Uterus (tissue), 4 donors: ENCODE measurements at regions of chr20 and their contacts with region 1.

Region 1: DNA sequence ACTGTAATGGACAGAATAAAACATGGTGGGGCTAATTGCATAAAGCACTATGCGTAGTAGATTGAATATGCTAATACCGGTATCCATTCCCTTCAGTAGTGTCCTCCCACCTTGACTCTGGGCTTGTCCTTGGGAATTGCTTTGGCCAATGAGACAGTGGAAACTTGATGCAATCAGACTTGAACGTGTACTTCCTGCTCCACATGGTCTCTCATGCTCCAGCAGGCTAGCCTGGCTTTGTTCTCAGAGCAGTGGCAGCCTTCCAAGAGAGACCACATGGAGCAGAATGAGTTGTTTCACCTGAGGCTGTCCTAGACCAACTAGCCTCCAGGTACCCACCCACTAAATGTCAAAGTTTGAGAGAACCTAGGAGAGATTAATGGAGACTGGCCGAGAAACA is 37.0 kb upstream of the BTBD3 start:
- DNase-seq: no peak
- H3K4me3 ChIP-seq: no peak overlapping the region
- H3K27ac ChIP-seq: no peak overlapping the region
- H3K4me1 ChIP-seq: no peaks in the 10 kb centered on the region
- H3K27me3 ChIP-seq: no peaks in the 10 kb centered on the region
- CTCF ChIP-seq: no peak
- POLR2A ChIP-seq: no peak

Region 2: GRCh38 chr20:11917663-11918062 is 37.0 kb after region 1 on chr20 and contains the start of gene BTBD3:
- intact Hi-C with region 1: loop called (anchors 2 kb)
- DNase-seq: peak; percentile 58
- H3K4me3 ChIP-seq: peak within 1 kb of the TSS; percentile 29 to 30
- H3K27ac ChIP-seq: peak within 1 kb of the TSS; percentile 54 to 69
- H3K4me1 ChIP-seq: no peaks in the 10 kb centered on the region
- H3K27me3 ChIP-seq: no peaks in the 10 kb centered on the region
- CTCF ChIP-seq: no peak
- POLR2A ChIP-seq: peak; percentile 23 to 42
- total RNA-seq, gene BTBD3: 22.8 to 124 (median 39.1) TPM